ENCODE measurements at regions of chr7 and their contacts with region 1.

Region 1: DNA sequence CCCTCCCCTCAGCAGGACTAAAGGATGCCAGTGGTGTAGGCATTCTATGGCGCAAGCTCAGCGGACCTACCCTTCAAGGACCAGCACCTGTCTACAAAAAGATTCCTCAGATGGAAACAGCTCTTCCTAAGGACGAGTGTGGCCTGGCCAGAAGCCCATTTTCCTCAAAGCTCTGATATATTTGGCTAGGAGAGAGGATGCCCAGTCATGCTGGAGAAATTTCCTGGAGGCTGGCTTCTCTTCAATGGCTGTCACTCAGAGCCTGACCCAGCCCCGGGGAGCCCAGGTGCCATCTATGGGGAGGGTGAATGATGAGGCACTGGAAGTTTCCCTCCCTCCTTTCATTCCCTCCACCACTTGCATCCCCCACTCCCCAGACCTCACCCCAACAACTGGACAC is 111.5 kb downstream of the PLXNA4 start:
- DNase-seq: peak; percentile 94
- H3K4me3 ChIP-seq: no peak overlapping the region
- H3K27ac ChIP-seq: peak overlapping the region; percentile 76
- H3K4me1 ChIP-seq: peaks cover 47% of the 10 kb centered on the region
- H3K27me3 ChIP-seq: no peaks in the 10 kb centered on the region
- CTCF ChIP-seq: no peak
- POLR2A ChIP-seq: peak; percentile 44

Region 2: GRCh38 chr7:132430861-132431822 is 33.6 kb before region 1 on chr7:
- CTCF ChIA-PET with region 1: interaction called, 5 read pairs
- POLR2A ChIA-PET with region 1: no interaction called
- dilution Hi-C with region 1: no loop called
- intact Hi-C with region 1: loop called (anchors 2 kb)
- DNase-seq: peak; percentile 92
- H3K4me3 ChIP-seq: no peak overlapping the region
- H3K27ac ChIP-seq: peak overlapping the region; percentile 87
- H3K4me1 ChIP-seq: peaks cover 44% of the 10 kb centered on the region
- H3K27me3 ChIP-seq: no peaks in the 10 kb centered on the region
- CTCF ChIP-seq: no peak
- POLR2A ChIP-seq: peak; percentile 26